Activated T-helper 2 cell treated with anti-CD3 and anti-CD28 coated beads, Interferon-gamma antibody, Interleukin-2, Interleukin-4, amounts not matched to agents 10 μg/mL and 5 μg/mL and 100 μg/mL, durations not matched to agents 14 hours and 24 hours and 36 hours (primary cell): ENCODE measurements at regions of chr1 and their contacts with region 1.

Region 1: GRCh38 chr1:66282343-66282852 is 251.6 kb upstream of the SGIP1 start:
- DNase-seq: peak; percentile 60
- H3K4me3 Mint-ChIP-seq: peak overlapping the region; percentile 35
- H3K27ac Mint-ChIP-seq: peak overlapping the region; percentile 86
- H3K4me1 Mint-ChIP-seq: peaks cover 69% of the 10 kb centered on the region
- H3K27me3 Mint-ChIP-seq: peaks cover 19% of the 10 kb centered on the region

Region 2: GRCh38 chr1:65393347-65393746 is 889.1 kb before region 1 on chr1:
- intact Hi-C with region 1: loop called (anchors 10 kb)
- DNase-seq: peak; percentile 13
- H3K4me3 Mint-ChIP-seq: no peak overlapping the region
- H3K27ac Mint-ChIP-seq: peak overlapping the region; percentile 62
- H3K4me1 Mint-ChIP-seq: peaks cover 80% of the 10 kb centered on the region
- H3K27me3 Mint-ChIP-seq: no peaks in the 10 kb centered on the region

Region 3: DNA sequence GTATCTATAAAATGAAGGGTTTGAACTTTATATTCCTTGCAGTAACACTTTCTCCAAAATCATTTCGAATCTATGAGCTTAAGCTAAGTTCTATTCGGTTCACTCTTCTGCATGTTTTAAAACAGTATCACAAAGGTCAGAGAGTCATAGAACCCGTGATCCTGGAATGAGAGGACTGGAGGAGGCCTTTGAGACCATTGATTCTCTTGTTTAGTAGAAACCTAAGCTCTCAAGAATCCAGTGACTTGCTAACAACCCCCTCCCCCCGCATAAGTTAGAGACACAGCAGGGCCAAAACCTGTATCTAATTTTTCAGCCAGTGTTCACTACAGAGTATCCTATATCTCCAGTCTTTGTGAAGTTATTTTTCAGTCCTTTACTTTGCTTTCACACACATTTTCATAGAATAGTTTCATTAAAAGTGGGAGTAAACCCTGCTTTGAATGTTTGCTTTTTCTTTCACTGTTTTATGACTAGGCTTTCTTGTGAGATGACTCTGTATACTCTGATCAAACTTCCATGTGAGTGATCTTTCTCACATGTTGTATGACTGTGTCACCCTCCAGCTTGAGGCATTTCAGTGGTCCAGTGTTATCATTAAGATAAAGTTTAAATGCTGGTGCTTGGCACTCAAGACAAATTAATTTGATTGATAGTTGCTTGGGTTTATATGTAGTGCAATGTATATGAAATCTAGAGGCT is 23.8 kb before region 1 on chr1:
- intact Hi-C with region 1: loop called (anchors 1 kb)
- DNase-seq: no peak
- H3K4me3 Mint-ChIP-seq: no peak overlapping the region
- H3K27ac Mint-ChIP-seq: no peak overlapping the region
- H3K4me1 Mint-ChIP-seq: peaks cover 52% of the 10 kb centered on the region
- H3K27me3 Mint-ChIP-seq: peaks cover 7% of the 10 kb centered on the region

Region 4: GRCh38 chr1:66300972-66301451 is 18.6 kb after region 1 on chr1:
- intact Hi-C with region 1: loop called (anchors 1 kb)
- DNase-seq: peak; percentile 21
- H3K4me3 Mint-ChIP-seq: peak overlapping the region; percentile 68
- H3K27ac Mint-ChIP-seq: peak overlapping the region; percentile 82
- H3K4me1 Mint-ChIP-seq: peaks cover 40% of the 10 kb centered on the region
- H3K27me3 Mint-ChIP-seq: no peaks in the 10 kb centered on the region

Region 5: DNA sequence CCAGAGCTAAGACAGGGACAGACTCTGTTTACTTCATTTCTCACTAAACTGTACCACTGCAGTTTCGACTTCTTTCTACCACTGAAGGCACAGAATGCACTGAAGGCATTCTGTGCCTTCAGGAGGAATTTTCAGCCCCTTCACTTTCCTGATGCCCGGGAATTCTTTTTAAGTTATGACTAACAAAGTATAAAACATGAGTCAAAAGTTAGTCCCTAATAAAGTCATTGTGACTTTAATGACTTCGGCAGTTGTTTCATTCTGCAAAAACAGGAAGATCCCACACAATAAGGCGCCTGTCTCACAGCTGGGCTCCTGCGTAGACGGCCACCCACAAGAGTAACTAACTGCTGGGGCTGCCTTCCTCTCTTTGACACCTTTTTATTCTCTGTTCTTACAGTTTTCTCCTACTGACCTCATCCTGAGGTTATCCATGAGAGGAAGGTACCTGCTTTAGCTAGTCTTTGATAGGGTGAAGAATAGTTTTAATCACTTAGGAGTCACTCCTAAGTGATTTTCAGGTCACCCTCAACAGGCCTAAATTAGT is 67.7 kb after region 1 on chr1:
- intact Hi-C with region 1: loop called (anchors 5 kb)
- DNase-seq: no peak
- H3K4me3 Mint-ChIP-seq: peak overlapping the region; percentile 47
- H3K27ac Mint-ChIP-seq: peak overlapping the region; percentile 72
- H3K4me1 Mint-ChIP-seq: peaks cover 68% of the 10 kb centered on the region
- H3K27me3 Mint-ChIP-seq: no peaks in the 10 kb centered on the region